ENCODE measurements at regions of chr12 and their contacts with region 1.

Region 1: GRCh38 chr12:14629832-14630710 is 62.4 kb upstream of the PLBD1 start:
- DNase-seq: peak; percentile 77
- H3K4me3 Mint-ChIP-seq: no peak overlapping the region
- H3K27ac Mint-ChIP-seq: no peak overlapping the region
- H3K4me1 Mint-ChIP-seq: no peaks in the 10 kb centered on the region
- H3K27me3 Mint-ChIP-seq: no peaks in the 10 kb centered on the region
- CTCF ChIP-seq: peak; percentile 88

Region 2: DNA sequence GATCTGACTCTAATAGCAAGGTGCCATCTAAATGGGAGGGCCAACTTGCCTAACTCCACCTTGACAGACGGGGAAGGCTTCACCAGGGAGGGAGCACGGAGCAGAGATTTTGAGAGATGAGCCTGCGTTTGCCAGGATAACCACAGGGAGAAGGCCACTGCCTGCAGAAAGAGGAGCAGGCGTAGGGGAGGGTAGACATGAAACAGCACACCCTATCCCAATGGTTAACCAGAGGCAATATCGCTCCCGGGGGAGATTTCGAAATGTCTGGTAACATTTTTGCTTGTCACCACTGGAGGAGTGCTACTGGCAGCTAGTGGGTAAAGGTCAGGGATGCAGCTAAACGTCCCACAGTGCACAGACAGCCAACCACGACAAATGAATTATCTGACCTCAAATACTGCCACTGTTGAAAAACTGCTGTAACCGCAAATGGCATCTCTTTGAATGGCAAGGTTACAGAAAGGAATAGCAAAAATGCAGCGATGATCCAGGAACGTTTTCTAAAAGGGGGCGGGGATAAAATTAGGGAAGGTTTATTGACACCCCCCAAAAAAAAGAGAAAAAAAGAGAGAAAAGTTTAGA is 390.6 kb before region 1 on chr12:
- CTCF ChIA-PET with region 1: interaction called, 20 read pairs
- POLR2A ChIA-PET with region 1: no interaction called
- intact Hi-C with region 1: loop called (anchors 5 kb)
- DNase-seq: no peak
- H3K4me3 Mint-ChIP-seq: no peak overlapping the region
- H3K27ac Mint-ChIP-seq: no peak overlapping the region
- H3K4me1 Mint-ChIP-seq: peaks cover 11% of the 10 kb centered on the region
- H3K27me3 Mint-ChIP-seq: no peaks in the 10 kb centered on the region
- CTCF ChIP-seq: no peak

Region 3: GRCh38 chr12:14618983-14619382 is 11.1 kb before region 1 on chr12:
- CTCF ChIA-PET with region 1: interaction called, 38 read pairs
- POLR2A ChIA-PET with region 1: interaction called, 3 read pairs
- intact Hi-C with region 1: no loop called
- DNase-seq: peak; percentile 48
- H3K4me3 Mint-ChIP-seq: no peak overlapping the region
- H3K27ac Mint-ChIP-seq: no peak overlapping the region
- H3K4me1 Mint-ChIP-seq: peaks cover 8% of the 10 kb centered on the region
- H3K27me3 Mint-ChIP-seq: no peaks in the 10 kb centered on the region
- CTCF ChIP-seq: peak; percentile 33

Region 4: DNA sequence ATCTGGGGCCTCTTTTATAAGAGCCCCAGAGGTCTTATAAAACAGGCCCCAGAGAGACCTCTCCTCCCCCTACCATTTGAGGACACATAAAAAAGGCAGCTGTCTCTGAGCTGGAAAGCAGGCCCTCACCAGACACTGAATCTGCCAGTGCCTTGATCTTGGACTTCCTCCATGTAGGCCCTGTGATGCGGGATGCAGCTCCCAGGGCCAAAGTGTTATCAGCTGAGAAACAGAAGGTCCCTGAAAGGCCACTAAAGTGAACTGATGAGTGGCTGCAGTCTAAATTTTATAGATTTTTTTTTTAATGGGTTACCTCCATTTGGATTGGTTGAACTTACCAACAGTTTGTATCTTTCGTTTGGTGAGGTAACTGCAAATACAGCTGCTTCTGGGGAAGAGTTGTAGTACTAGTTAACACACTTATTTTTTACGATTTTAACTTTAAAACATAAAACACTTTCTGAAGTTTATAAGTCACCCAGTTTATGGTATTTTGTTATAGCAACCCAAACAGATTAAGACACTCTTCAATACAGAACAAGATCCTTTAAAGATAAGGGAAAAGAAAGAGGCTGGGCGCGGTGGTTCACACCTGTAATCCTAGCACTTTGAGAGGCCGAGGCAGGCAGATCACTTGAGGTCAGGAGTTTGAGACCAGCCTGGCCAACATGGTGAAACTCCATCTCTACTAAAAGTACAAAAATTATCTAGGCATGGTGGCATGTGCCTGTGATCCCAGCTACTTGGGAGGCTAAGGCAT is 71.9 kb after region 1 on chr12:
- CTCF ChIA-PET with region 1: no interaction called
- POLR2A ChIA-PET with region 1: no interaction called
- intact Hi-C with region 1: no loop called
- DNase-seq: no peak
- H3K4me3 Mint-ChIP-seq: no peak overlapping the region
- H3K27ac Mint-ChIP-seq: no peak overlapping the region
- H3K4me1 Mint-ChIP-seq: no peaks in the 10 kb centered on the region
- H3K27me3 Mint-ChIP-seq: no peaks in the 10 kb centered on the region
- CTCF ChIP-seq: no peak

Region 5: DNA sequence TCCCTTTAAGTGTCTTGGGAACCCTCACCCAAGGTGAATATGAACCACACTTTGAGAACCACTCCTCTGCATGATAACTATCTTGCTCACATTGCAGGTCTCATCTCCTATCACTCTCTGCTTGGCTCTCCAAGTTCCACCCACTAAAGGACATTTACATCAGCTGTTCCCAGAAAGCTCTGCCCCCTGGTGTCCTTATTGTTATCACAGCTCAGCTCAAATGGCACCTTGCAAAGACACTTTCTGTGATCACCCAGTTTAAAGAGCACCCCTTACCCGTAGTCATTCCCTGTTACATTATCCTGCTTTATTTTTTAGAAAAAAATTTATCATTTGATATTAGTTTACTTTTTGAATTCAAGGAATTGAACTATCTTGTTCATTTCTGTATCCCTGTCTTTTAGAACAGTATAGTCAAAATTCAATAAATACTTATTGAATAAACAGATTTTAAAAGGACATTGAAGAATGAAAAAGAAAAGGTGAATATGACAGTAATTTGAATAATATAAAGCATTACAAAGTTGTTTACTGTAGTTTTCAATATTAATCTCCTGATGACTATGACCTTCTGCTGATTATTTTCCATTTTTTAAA is 86.9 kb after region 1 on chr12:
- CTCF ChIA-PET with region 1: interaction called, 4 read pairs
- POLR2A ChIA-PET with region 1: no interaction called
- intact Hi-C with region 1: loop called (anchors 1 kb)
- DNase-seq: peak; percentile 60
- H3K4me3 Mint-ChIP-seq: no peak overlapping the region
- H3K27ac Mint-ChIP-seq: no peak overlapping the region
- H3K4me1 Mint-ChIP-seq: no peaks in the 10 kb centered on the region
- H3K27me3 Mint-ChIP-seq: no peaks in the 10 kb centered on the region
- CTCF ChIP-seq: peak; percentile 37

Region 6: DNA sequence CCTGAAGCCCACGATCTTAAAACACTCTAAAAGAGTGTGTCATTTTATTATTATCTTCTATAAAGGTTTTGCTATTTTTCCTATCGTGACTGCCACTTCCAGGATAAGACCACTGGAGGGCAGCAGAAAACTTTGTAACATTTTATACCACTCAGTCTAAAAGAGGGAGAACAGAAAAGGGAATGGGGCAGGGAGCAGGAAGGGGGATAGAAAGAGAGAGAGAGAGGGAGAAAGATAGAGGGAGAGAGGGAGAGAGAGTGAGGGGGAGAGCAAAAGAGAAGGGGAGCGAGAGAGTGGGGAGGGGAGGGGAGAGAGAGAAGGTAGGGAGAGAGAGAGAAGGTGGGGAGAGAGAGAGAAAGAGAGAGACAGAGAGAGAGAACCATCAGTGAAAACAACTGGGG is 215.3 kb after region 1 on chr12:
- CTCF ChIA-PET with region 1: no interaction called
- POLR2A ChIA-PET with region 1: no interaction called
- intact Hi-C with region 1: loop called (anchors 1 kb)
- DNase-seq: peak; percentile 74
- H3K4me3 Mint-ChIP-seq: no peak overlapping the region
- H3K27ac Mint-ChIP-seq: peak overlapping the region; percentile 78
- H3K4me1 Mint-ChIP-seq: peaks cover 23% of the 10 kb centered on the region
- H3K27me3 Mint-ChIP-seq: no peaks in the 10 kb centered on the region
- CTCF ChIP-seq: peak; percentile 68

Region 7: DNA sequence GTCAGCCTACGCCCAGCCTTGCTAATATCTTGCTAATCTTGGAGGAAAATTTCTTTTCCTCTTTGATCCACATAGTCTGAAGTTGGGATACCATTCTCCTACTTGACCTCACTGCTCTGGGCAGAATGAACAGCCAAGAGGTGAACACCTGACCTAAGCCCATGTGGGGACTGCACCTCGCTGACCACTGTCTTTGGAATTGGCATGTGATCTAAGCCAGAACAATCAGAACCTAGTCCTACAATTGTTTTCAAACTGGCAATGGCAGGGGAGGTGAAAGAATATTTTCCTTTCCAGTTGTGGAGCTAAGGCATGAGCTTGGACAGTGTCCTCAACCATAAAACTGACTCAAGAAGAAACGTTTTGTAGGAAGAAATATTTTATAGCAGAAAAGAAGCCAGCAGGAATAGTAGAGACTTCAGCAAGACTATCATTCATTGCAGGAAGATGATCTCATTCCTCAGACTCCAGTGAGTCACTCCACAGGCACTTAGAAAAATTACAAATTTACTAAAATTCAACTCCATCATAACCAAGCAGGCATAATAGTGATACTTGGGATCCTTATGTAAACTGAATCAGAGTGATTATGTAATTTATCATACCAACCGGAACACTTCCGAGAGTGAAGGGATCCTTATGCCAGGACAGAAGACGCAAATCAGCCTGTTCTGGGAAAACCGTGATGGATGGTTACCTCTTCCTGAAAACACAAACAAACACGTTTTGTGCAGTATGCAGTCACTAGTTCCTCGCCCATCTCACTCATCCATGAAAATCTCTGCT is 706.9 kb after region 1 on chr12:
- CTCF ChIA-PET with region 1: no interaction called
- POLR2A ChIA-PET with region 1: no interaction called
- intact Hi-C with region 1: no loop called
- DNase-seq: peak; percentile 69
- H3K4me3 Mint-ChIP-seq: peak overlapping the region; percentile 15
- H3K27ac Mint-ChIP-seq: peak overlapping the region; percentile 50
- H3K4me1 Mint-ChIP-seq: peaks cover 22% of the 10 kb centered on the region
- H3K27me3 Mint-ChIP-seq: no peaks in the 10 kb centered on the region
- CTCF ChIP-seq: no peak

Region 8: DNA sequence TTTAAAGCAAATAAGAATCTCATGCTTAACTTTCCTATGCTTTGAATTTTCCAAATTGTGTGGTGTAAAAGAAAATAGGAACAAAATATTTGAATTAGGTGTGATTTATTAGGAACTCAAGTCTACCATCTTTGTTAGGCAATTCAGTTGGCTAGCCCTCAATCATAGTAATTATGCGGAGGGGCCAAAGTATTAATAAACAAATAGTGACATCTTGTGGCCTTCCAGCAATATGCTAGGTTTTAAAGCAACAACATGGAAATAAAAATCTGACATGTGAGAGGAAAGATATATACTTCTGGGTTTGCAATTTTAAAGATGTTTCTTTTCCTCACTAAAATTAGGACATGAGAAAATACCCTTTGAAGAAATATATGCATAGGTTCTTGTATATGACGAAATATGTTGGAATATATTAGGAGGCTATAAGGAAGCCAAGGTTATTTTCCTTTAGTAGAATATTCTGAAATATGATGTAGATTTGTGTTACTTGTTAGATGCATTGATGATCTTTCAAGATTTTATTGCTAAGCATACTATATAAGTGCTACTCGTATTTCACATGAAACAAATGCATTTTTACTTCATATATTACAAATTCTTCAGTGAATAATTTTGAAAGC is 892.6 kb after region 1 on chr12:
- CTCF ChIA-PET with region 1: no interaction called
- POLR2A ChIA-PET with region 1: no interaction called
- intact Hi-C with region 1: loop called (anchors 10 kb)
- DNase-seq: peak; percentile 68
- H3K4me3 Mint-ChIP-seq: no peak overlapping the region
- H3K27ac Mint-ChIP-seq: no peak overlapping the region
- H3K4me1 Mint-ChIP-seq: peaks cover 17% of the 10 kb centered on the region
- H3K27me3 Mint-ChIP-seq: no peaks in the 10 kb centered on the region
- CTCF ChIP-seq: peak; percentile 69